Activated CD8-positive, alpha-beta T cell treated with anti-CD3 and anti-CD28 coated beads for 36 hours (primary cell): ENCODE measurements at regions of chr1 and their contacts with region 1.

Region 1: GRCh38 chr1:206106328-206107167 is 10.6 kb downstream of the AVPR1B start:
- DNase-seq: peak; percentile 88
- ATAC-seq: peak; percentile 95
- H3K4me3 Mint-ChIP-seq: no peak overlapping the region
- H3K27ac Mint-ChIP-seq: no peak overlapping the region
- H3K4me1 Mint-ChIP-seq: no peaks in the 10 kb centered on the region
- H3K27me3 Mint-ChIP-seq: no peaks in the 10 kb centered on the region
- CTCF ChIP-seq: peak; percentile 85

Region 2: GRCh38 chr1:205919026-205919746 is 187.4 kb before region 1 on chr1:
- CTCF ChIA-PET with region 1: interaction called, 31 read pairs
- POLR2A ChIA-PET with region 1: no interaction called
- intact Hi-C with region 1: loop called (anchors 5 kb)
- DNase-seq: peak; percentile 88
- ATAC-seq: peak; percentile 95
- H3K4me3 Mint-ChIP-seq: no peak overlapping the region
- H3K27ac Mint-ChIP-seq: no peak overlapping the region
- H3K4me1 Mint-ChIP-seq: no peaks in the 10 kb centered on the region
- H3K27me3 Mint-ChIP-seq: no peaks in the 10 kb centered on the region
- CTCF ChIP-seq: peak; percentile 84

Region 3: DNA sequence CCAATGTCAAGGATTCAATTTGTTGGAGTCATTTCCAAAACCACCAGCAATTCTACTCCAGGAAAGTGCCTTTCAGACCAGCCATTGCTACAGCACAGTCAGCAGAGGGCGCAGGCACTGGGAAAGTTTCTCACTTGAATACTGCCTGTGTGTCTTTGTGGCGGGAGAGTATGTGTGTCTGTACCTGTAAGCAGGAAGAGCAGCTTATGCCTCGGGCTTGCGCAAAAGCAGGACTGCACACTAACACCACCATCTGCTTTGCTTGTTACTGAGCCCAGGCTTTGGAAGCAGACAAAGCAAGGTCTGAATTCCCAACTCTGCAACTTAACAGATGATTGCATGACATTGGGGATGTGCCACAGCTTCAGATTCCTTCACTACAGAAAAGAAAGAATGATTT is 75.8 kb before region 1 on chr1:
- CTCF ChIA-PET with region 1: interaction called, 236 read pairs
- POLR2A ChIA-PET with region 1: interaction called, 6 read pairs
- intact Hi-C with region 1: loop called (anchors 2 kb)
- DNase-seq: peak; percentile 78
- ATAC-seq: peak; percentile 96
- H3K4me3 Mint-ChIP-seq: no peak overlapping the region
- H3K27ac Mint-ChIP-seq: no peak overlapping the region
- H3K4me1 Mint-ChIP-seq: peaks cover 9% of the 10 kb centered on the region
- H3K27me3 Mint-ChIP-seq: peaks cover 24% of the 10 kb centered on the region
- CTCF ChIP-seq: peak; percentile 89

Region 4: DNA sequence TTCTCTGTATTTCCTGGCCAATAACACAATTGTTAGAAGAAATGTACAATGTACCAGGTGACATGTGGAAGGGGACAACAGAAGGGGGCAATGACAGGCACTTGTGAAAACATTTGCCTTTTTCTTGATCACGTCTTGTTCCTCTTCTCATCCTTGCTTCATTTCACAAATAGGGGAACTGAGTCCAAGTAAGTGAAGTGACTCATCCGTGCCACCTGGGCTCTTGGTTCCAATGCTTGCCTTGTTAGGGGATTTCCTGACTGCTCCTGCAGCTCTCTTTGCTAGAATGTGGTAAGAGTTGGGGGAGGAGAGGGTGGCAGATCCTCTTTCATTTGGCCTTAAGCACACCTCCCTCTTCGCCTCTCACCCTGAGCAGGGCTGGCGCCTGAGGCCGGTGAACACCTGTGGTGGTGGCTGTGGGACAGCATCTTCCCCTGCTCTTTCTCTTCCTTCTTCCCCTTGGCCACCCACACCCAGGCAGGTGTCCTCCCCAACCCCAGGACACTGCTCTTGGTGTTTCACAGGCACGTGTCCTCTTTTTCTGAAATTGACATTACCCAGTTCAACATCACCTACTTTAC is 55.8 kb before region 1 on chr1:
- CTCF ChIA-PET with region 1: interaction called, 17 read pairs
- POLR2A ChIA-PET with region 1: no interaction called
- intact Hi-C with region 1: no loop called
- DNase-seq: peak; percentile 81
- ATAC-seq: peak; percentile 91
- H3K4me3 Mint-ChIP-seq: peak overlapping the region; percentile 11
- H3K27ac Mint-ChIP-seq: peak overlapping the region; percentile 86
- H3K4me1 Mint-ChIP-seq: peaks cover 37% of the 10 kb centered on the region
- H3K27me3 Mint-ChIP-seq: peaks cover 4% of the 10 kb centered on the region
- CTCF ChIP-seq: no peak

Region 5: DNA sequence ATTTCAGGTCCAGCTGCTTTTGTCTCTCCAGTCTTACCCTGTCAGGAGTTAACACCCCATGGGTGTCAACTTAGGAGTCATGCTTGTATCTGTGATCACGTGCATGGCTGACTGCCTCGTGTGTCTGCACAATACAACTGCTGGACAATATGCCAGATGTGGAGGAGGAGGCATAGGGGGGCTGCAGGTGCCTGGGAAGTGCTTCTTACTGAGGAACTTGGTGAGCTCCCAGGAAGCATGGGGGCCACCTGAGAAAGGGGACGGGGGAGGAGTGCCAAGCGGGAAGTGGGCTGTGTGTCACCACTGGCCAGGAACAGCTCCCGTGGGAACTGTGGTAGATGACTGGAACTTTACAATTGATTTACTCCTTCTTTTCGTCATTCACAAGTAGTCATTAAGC is 44.1 kb before region 1 on chr1:
- CTCF ChIA-PET with region 1: no interaction called
- POLR2A ChIA-PET with region 1: no interaction called
- intact Hi-C with region 1: no loop called
- DNase-seq: no peak
- ATAC-seq: no peak
- H3K4me3 Mint-ChIP-seq: no peak overlapping the region
- H3K27ac Mint-ChIP-seq: no peak overlapping the region
- H3K4me1 Mint-ChIP-seq: peaks cover 11% of the 10 kb centered on the region
- H3K27me3 Mint-ChIP-seq: peaks cover 7% of the 10 kb centered on the region
- CTCF ChIP-seq: no peak

Region 6: GRCh38 chr1:206094024-206094423 is 12.5 kb before region 1 on chr1:
- CTCF ChIA-PET with region 1: interaction called, 27 read pairs
- POLR2A ChIA-PET with region 1: no interaction called
- intact Hi-C with region 1: no loop called
- DNase-seq: no peak
- ATAC-seq: no peak
- H3K4me3 Mint-ChIP-seq: no peak overlapping the region
- H3K27ac Mint-ChIP-seq: no peak overlapping the region
- H3K4me1 Mint-ChIP-seq: no peaks in the 10 kb centered on the region
- H3K27me3 Mint-ChIP-seq: peaks cover 15% of the 10 kb centered on the region
- CTCF ChIP-seq: no peak